Heart right ventricle (tissue), 16 donors: ENCODE measurements at regions of chr11 and their contacts with region 1.

Region 1: DNA sequence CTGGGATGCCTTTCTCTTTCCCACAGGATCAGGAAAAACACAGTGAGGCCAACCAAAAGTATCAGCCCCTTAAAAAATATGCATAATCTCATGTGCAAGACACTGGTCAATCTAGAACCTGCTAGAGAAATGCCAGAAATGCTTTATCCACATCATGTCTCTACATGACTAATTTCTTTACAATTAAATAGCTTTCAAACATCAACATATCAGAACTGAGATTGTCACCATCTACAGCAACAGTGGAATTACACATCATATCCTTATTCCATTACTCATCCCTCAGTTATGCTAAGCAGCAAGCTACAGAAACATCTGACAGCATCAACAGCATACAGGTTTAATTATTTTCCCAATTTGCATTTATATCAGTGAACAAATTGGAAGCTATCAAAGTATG is 78.8 kb downstream of the DDIAS start:
- DNase-seq: no peak
- ATAC-seq: peak in 1 of 8 donors; percentile 42
- H3K4me3 ChIP-seq: no peak overlapping the region
- H3K27ac ChIP-seq: no peak overlapping the region
- H3K4me1 ChIP-seq: peaks cover 0 to 29% (median 13%) of the 10 kb centered on the region in 9 donors
- H3K27me3 ChIP-seq: no peaks in the 10 kb centered on the region
- CTCF ChIP-seq: no peak

Region 2: DNA sequence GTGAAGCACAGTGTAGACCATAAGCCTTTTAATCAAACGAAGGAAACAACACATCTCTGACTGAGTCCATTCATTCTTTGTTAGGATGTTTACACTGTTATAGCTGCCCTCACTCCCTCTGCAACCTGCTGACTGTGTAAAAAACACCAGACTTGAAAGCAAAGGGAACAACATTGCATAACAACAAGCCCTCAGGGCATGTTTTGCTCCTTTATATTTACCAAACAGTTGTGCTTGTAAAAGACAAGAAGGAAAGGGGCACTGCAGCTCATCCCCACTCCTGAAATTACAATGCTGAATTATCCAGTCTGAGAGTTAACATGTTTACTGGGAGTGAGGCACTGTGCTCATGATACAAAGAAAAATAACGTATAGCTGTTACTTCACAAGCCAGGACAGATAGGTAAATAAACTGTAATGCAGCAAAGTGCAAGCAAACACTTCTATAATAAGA is 45.0 kb after region 1 on chr11:
- intact Hi-C with region 1: loop called in 2 of 10 experiments (anchors 2 to 10 kb)
- DNase-seq: no peak
- ATAC-seq: no peak
- H3K4me3 ChIP-seq: no peak overlapping the region
- H3K27ac ChIP-seq: no peak overlapping the region
- H3K4me1 ChIP-seq: peaks cover 0 to 64% (median 34%) of the 10 kb centered on the region in 9 donors
- H3K27me3 ChIP-seq: no peaks in the 10 kb centered on the region
- CTCF ChIP-seq: no peak

Region 3: GRCh38 chr11:83033972-83034672 is 53.8 kb after region 1 on chr11:
- intact Hi-C with region 1: loop called in 1 of 10 experiments (anchors 10 kb)
- DNase-seq: peak; percentile 24 to 30
- ATAC-seq: peak; percentile 83 to 92 (median 90)
- H3K4me3 ChIP-seq: peak overlapping the region; percentile 8 to 47 (median 40)
- H3K27ac ChIP-seq: peak overlapping the region; percentile 32 to 89 (median 80)
- H3K4me1 ChIP-seq: peaks cover 2 to 78% (median 58%) of the 10 kb centered on the region in 9 donors
- H3K27me3 ChIP-seq: no peaks in the 10 kb centered on the region
- CTCF ChIP-seq: no peak

Region 4: DNA sequence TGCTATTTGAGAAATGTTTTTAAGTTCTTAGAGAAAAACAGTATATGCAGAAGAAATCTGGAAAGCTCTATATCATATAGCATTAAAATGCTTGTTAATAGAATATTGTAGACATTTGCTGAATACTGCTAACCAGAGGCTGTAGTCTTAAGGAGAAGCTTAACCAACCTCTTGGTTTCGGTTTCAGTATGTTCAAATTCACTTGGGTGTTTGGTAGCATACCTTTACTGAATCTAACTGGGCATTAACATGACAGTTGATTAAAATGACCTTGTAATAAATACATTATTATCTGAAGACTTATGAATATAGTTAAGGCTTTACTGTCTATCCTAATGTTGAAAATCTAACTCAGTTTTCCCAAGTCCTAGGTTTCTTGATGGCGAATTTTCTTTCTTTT is 182.1 kb after region 1 on chr11:
- intact Hi-C with region 1: loop called in 1 of 10 experiments (anchors 10 kb)
- DNase-seq: no peak
- ATAC-seq: no peak
- H3K4me3 ChIP-seq: peak overlapping the region in 1 of 10 donors; percentile 86
- H3K27ac ChIP-seq: peak overlapping the region in 3 of 10 donors; percentile 4 to 28 (median 22)
- H3K4me1 ChIP-seq: peaks cover 0 to 63% (median 44%) of the 10 kb centered on the region in 9 donors
- H3K27me3 ChIP-seq: no peaks in the 10 kb centered on the region
- CTCF ChIP-seq: no peak